ENCODE measurements at regions of chr11 and their contacts with region 1.

Region 1: DNA sequence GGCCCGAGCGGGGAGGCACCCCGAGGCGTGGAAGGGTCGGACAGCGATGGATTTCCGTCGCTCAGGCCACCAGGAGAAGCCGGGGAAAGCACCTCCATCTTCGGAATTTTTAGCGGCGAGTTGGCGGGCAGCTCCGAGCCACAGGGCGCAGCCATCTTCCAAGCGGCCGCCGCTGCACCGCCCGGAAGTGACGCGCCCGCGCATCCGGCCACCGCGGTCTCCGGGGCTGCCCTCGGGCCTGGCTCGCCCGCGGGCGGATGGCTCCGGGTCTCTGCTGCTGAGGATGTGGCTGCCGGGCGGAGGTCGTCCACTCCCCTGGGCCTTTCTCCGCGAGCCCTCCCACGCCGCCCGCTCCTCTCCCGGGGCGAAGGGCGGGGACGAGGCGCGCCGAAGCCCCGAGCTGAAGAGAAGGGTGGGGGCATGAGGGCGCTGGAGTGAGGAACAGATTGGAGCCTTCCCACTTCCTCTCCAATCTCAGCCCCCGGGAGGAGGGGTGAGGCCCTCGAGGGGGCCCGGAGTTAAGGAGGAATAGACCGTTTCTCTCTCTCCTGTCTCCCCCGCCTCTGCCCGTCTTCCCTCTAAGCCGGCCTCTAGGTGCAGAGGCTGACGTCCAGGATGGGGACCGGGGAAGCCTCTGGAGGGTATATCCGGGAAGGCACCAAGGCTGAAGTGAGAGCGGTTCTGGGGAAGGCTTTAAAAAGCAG is at the start of gene MSANTD2:
- DNase-seq: peak; percentile 83
- ATAC-seq: peak; percentile 90
- H3K4me3 Mint-ChIP-seq: peak within 1 kb of the TSS; percentile 85
- H3K27ac Mint-ChIP-seq: peak within 1 kb of the TSS; percentile 93
- H3K4me1 Mint-ChIP-seq: peaks cover 26% of the 10 kb centered on the region
- H3K27me3 Mint-ChIP-seq: peaks cover 12% of the 10 kb centered on the region
- total RNA-seq, gene MSANTD2: 9.1 to 10.2 TPM

Region 2: DNA sequence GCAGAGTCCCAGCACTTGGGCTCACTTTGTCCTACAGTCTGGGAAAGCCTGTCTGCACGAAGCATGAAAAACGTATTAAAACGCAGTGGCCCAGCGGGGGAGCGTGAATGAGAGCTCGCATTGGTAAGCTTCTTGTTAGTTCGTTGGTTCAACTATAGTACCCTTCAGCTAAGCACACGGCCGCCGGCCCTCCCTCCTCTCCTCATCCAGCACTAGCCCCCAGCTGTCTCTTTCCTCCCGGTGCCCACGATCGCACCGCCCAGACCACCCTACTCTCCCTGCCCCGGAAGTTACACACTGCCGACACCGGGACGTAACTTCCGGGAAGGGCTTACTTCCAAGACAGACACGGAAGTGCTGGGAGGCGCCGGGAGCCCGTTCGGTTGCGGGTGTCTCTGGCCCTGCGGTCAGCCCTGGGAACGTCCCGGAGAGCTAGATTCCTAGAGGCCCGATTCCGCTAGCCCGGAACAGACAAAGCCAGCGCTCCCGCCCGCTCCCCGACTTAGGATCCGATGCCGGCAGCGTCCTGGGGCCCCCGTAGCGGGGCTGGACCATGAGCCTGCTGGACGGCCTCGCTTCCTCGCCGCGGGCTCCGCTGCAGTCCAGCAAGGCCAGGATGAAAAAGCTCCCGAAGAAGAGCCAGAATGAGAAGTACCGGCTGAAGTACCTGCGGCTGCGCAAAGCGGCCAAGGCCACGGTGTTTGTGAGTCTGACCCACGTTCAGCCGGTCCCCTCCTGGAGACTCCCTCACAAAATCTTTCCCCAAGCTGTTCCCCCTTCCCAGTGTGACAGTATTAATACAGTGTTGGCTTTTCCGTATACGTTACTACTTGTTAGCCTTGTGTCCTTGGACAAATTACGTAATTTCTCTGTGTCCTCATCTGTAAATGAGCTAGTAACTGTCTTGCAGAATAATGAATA is 177.6 kb before region 1 on chr11 and contains the start of gene TBRG1:
- CTCF ChIA-PET with region 1: interaction called, 5 read pairs
- POLR2A ChIA-PET with region 1: interaction called, 19 read pairs
- DNase-seq: peak; percentile 88
- ATAC-seq: peak; percentile 98
- H3K4me3 Mint-ChIP-seq: peak within 1 kb of the TSS; percentile 97
- H3K27ac Mint-ChIP-seq: peak within 1 kb of the TSS; percentile 95
- H3K4me1 Mint-ChIP-seq: peaks cover 22% of the 10 kb centered on the region
- H3K27me3 Mint-ChIP-seq: peaks cover 10% of the 10 kb centered on the region
- total RNA-seq, gene TBRG1: 36.2 to 41.3 TPM

Region 3: DNA sequence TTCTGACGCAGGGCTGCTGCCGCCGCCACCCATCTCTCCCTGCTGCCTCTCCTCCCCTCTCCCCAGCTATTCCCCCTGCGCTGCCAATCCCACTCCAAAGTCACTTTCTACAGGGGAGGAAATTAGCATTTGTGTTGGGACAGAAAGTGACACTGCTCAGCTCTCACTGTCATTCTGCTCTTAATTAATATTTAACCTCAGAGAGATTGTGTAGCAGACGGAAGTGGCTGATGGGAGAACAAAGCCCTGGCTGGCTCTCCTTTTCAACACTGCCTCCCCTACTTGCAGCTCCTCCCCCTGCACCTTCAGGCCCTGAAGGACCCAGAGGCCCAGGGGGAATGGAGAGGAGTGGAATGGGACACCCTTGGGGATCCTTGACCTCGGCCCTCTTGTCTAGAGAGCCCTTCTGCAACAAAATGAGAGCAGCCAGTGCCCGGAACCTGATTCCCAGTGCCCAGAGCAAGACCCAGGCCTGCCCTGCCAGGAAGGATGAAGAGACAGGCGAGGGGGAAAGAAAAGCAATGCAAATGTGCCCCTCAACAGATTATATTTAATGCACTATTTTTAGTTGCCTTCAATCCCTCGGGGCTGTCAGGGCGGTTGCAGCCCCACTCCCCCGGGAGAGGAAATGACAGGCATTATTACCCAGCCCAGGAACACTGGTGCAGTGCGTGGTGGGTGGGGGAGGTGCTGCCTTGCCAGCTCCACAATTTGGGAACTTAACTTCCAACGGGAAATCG is 75.2 kb before region 1 on chr11:
- CTCF ChIA-PET with region 1: no interaction called
- POLR2A ChIA-PET with region 1: no interaction called
- DNase-seq: no peak
- ATAC-seq: no peak
- H3K4me3 Mint-ChIP-seq: no peak overlapping the region
- H3K27ac Mint-ChIP-seq: no peak overlapping the region
- H3K4me1 Mint-ChIP-seq: peaks cover 11% of the 10 kb centered on the region
- H3K27me3 Mint-ChIP-seq: peaks cover 48% of the 10 kb centered on the region

Region 4: DNA sequence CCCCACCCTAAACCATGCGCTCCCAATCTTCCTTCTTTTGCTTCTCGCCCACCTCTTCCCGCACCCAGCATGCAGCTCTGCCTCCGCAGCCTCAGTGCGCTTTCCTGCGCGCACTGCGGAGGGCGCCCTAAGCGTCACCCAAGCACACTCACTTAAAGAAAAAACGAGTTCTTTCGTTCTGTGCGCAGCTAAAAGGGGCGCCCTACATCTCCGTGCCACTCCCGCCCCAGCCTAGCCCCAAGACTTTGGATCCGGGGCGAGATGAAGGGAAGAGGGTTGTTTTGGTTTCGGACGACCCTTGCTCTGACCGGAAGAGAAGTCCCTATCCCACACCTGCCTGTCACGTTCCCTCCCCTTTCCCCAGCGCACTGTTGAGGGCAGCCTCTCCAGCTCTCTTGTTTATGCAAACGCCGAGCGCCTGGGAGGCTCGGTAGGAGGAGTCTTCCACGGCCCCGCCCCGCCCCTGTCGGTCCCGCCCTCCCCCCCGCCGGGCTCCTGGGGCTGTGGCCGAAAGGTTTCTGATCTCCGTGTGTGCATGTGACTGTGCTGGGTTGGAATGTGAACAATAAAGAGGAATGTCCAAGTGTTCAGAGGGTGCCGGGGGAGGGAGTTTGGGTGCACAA is 53.6 kb before region 1 on chr11:
- CTCF ChIA-PET with region 1: interaction called, 19 read pairs
- POLR2A ChIA-PET with region 1: interaction called, 5 read pairs
- DNase-seq: peak; percentile 81
- ATAC-seq: peak; percentile 92
- H3K4me3 Mint-ChIP-seq: peak overlapping the region; percentile 88
- H3K27ac Mint-ChIP-seq: peak overlapping the region; percentile 84
- H3K4me1 Mint-ChIP-seq: peaks cover 25% of the 10 kb centered on the region
- H3K27me3 Mint-ChIP-seq: peaks cover 22% of the 10 kb centered on the region